ENCODE measurements at regions of chr15 and their contacts with region 1.

Region 1: GRCh38 chr15:73866881-73867410 is 6.4 kb upstream of the TBC1D21 start:
- DNase-seq: no peak
- H3K4me3 ChIP-seq: no peak overlapping the region
- H3K27ac ChIP-seq: no peak overlapping the region
- H3K4me1 ChIP-seq: no peaks in the 10 kb centered on the region; a peak in 1 of 4 replicates
- H3K27me3 ChIP-seq: peaks cover 19% of the 10 kb centered on the region; the same call in 1 of the 2 replicates
- CTCF ChIP-seq: no peak; the same call in 1 of the 2 replicates
- EP300 ChIP-seq: no peak
- RAD21 ChIP-seq: no peak

Region 2: DNA sequence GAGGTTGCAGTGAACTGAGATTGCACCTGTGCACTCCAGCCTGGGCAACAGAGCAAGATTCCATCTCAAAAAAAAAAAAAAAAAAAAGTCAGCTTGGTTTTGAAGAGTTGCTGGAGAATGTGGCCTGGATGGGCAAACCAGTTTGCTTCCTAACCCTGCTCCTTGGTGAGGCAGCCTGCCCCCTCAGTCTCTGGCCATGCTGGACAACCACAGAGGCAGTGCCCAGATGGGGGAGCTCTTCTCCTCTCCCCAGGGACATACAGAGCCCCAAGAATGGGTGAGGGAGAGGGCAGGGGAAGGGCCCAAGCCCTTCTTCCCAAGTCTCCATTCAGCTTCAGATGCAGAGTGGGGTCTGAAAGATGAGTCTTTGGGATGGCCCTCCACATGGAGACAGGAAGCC is 154.9 kb before region 1 on chr15:
- CTCF ChIA-PET with region 1: no interaction called
- POLR2A ChIA-PET with region 1: no interaction called
- DNase-seq: no peak
- H3K4me3 ChIP-seq: no peak overlapping the region
- H3K27ac ChIP-seq: no peak overlapping the region
- H3K4me1 ChIP-seq: peaks cover 0 to 4% of the 10 kb centered on the region in 2 experiments; a peak in 1 of 4 replicates
- H3K27me3 ChIP-seq: no peaks in the 10 kb centered on the region
- CTCF ChIP-seq: peak; percentile 30; the same call in 1 of the 2 replicates
- EP300 ChIP-seq: no peak
- RAD21 ChIP-seq: peak; percentile 36; the same call in 1 of the 2 replicates

Region 3: DNA sequence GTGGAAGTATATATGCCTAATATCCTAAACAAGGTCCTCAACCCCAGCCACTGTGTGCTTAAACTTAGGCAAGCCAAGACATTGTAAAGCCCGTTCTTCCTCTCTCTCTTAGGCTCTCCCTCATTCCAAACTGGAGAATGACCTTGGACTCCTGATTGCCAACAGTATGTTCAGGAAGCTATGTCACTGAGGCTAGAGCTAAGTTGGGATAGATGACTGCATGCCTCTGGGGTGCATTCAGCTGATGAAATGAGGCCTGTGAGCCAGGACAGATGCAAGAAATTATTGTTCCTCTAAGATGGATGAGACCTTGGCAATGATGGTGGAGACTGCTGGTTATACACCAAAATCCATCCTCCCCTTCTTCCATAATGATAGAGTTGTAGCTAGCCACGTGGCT is 21.4 kb before region 1 on chr15:
- CTCF ChIA-PET with region 1: interaction called, 13 read pairs
- POLR2A ChIA-PET with region 1: no interaction called
- DNase-seq: no peak
- H3K4me3 ChIP-seq: no peak overlapping the region
- H3K27ac ChIP-seq: no peak overlapping the region
- H3K4me1 ChIP-seq: peaks cover 0 to 13% of the 10 kb centered on the region in 2 experiments; a peak in 1 of 4 replicates
- H3K27me3 ChIP-seq: peaks cover 25% of the 10 kb centered on the region
- CTCF ChIP-seq: no peak
- EP300 ChIP-seq: no peak
- RAD21 ChIP-seq: no peak